ENCODE measurements at regions of chr11 and their contacts with region 1.

Region 1: GRCh38 chr11:3880724-3881123 is 25.3 kb downstream of the STIM1 start:
- DNase-seq: no peak
- H3K4me3 Mint-ChIP-seq: no peak overlapping the region
- H3K27ac Mint-ChIP-seq: peak overlapping the region; percentile 7
- H3K4me1 Mint-ChIP-seq: peaks cover 73% of the 10 kb centered on the region
- H3K27me3 Mint-ChIP-seq: no peaks in the 10 kb centered on the region

Region 2: DNA sequence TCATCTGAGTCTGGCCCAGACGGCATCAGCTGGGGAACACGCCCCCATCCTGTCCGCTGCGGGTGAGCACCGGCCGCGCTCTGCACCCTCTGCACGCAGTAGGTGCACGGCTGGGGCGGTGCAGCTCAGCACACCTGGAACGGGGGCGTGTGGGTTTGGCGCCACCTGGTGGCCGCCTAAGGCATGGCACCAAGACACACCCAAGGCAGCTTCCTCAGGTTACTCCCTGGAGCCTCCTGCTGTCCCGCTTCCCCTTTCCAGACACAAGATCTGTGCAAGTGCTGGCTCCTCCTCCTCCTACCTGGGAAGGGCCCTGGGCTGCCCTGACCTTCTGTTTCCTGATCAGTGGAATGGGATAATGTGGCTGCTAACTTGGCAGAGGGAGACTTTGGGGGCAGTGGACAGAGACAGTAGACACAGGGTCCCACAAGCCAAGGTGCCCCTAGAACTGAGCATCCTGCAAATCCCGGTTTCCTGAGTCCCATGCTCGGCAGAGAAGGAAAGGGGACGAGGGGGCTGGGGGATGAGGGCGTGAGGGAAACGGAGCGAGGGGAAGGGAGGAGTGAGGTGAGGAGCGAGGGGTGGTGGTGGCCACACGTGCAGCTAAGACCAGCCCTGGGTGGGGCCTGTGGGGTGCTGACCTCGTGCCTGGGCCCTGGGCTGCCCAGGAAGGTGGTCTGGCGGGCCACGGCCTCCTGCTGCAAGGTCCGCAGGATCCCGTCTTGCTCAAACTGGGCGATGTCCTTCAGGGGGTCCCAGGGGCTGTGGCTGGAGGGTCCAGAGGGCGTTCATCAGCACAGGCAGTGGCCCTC is 788.7 kb before region 1 on chr11:
- CTCF ChIA-PET with region 1: no interaction called
- POLR2A ChIA-PET with region 1: no interaction called
- intact Hi-C with region 1: no loop called
- DNase-seq: peak; percentile 81
- H3K4me3 Mint-ChIP-seq: no peak overlapping the region
- H3K27ac Mint-ChIP-seq: no peak overlapping the region
- H3K4me1 Mint-ChIP-seq: no peaks in the 10 kb centered on the region
- H3K27me3 Mint-ChIP-seq: peaks cover 1% of the 10 kb centered on the region

Region 3: GRCh38 chr11:3359092-3359824 is 521.5 kb before region 1 on chr11:
- CTCF ChIA-PET with region 1: no interaction called
- POLR2A ChIA-PET with region 1: no interaction called
- intact Hi-C with region 1: no loop called
- DNase-seq: no peak
- H3K4me3 Mint-ChIP-seq: no peak overlapping the region
- H3K27ac Mint-ChIP-seq: no peak overlapping the region
- H3K4me1 Mint-ChIP-seq: no peaks in the 10 kb centered on the region
- H3K27me3 Mint-ChIP-seq: no peaks in the 10 kb centered on the region

Region 4: GRCh38 chr11:3861683-3862082 is 19.0 kb before region 1 on chr11:
- CTCF ChIA-PET with region 1: interaction called, 3 read pairs
- POLR2A ChIA-PET with region 1: no interaction called
- intact Hi-C with region 1: loop called (anchors 2 kb)
- DNase-seq: peak; percentile 55
- H3K4me3 Mint-ChIP-seq: peak overlapping the region; percentile 45
- H3K27ac Mint-ChIP-seq: peak overlapping the region; percentile 90
- H3K4me1 Mint-ChIP-seq: peaks cover 83% of the 10 kb centered on the region
- H3K27me3 Mint-ChIP-seq: no peaks in the 10 kb centered on the region